Activated naive CD4-positive, alpha-beta T cell treated with anti-CD3 and anti-CD28 coated beads for 36 hours (primary cell): ENCODE measurements at regions of chr4 and their contacts with region 1.

Region 1: DNA sequence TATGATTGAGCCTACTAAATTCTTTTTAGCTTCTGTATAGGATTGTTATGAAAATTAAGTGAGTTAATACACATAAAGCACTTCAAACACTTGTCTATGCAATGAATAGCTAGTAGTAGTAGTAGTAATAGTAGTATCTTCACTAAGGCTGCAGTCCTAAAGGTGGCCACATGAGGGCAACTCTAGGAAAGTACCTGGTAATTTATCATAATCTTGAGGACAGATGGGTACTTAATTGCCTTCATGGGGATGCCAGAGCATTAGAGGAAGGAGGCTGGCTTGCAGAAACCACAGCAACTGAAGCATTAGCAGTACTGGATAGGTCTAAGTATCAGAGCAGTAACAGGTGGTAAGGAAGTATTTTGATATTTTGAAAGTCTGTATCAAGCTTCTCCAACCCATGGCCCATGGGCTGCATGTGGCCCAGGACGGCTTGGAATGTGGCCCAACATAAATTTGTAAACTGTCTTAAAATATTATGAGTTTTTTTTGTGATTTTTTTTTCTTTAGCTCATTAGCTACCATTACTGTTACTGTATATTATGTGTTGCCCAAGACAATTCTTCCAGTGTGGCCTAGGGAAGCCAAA is 17.3 kb downstream of the NIPAL1 start:
- DNase-seq: peak; percentile 87
- H3K4me3 Mint-ChIP-seq: no peak overlapping the region
- H3K27ac Mint-ChIP-seq: no peak overlapping the region
- H3K4me1 Mint-ChIP-seq: peaks cover 56% of the 10 kb centered on the region
- H3K27me3 Mint-ChIP-seq: no peaks in the 10 kb centered on the region

Region 2: GRCh38 chr4:47873877-47874541 is 159.9 kb before region 1 on chr4:
- CTCF ChIA-PET with region 1: no interaction called
- intact Hi-C with region 1: loop called (anchors 1 kb)
- DNase-seq: no peak
- H3K4me3 Mint-ChIP-seq: no peak overlapping the region
- H3K27ac Mint-ChIP-seq: peak overlapping the region; percentile 16
- H3K4me1 Mint-ChIP-seq: peaks cover 11% of the 10 kb centered on the region
- H3K27me3 Mint-ChIP-seq: no peaks in the 10 kb centered on the region

Region 3: GRCh38 chr4:48016141-48017103 is 17.5 kb before region 1 on chr4 and contains the starts of genes CNGA1 and NIPAL1:
- CTCF ChIA-PET with region 1: interaction called, 48 read pairs
- intact Hi-C with region 1: loop called (anchors 1 kb)
- DNase-seq: peak; percentile 72
- H3K4me3 Mint-ChIP-seq: peak within 1 kb of the TSS; percentile 81
- H3K27ac Mint-ChIP-seq: peak within 1 kb of the TSS; percentile 46
- H3K4me1 Mint-ChIP-seq: peaks cover 26% of the 10 kb centered on the region
- H3K27me3 Mint-ChIP-seq: peaks cover 5% of the 10 kb centered on the region
- total RNA-seq, gene CNGA1: 0.26 to 0.94 TPM
- total RNA-seq, gene NIPAL1: 1.0 to 2.0 TPM

Region 4: GRCh38 chr4:48085821-48086607 is 52.1 kb after region 1 on chr4:
- CTCF ChIA-PET with region 1: interaction called, 71 read pairs
- intact Hi-C with region 1: loop called (anchors 1 kb)
- DNase-seq: no peak
- H3K4me3 Mint-ChIP-seq: no peak overlapping the region
- H3K27ac Mint-ChIP-seq: no peak overlapping the region
- H3K4me1 Mint-ChIP-seq: peaks cover 27% of the 10 kb centered on the region
- H3K27me3 Mint-ChIP-seq: no peaks in the 10 kb centered on the region

Region 5: GRCh38 chr4:48141048-48141447 is 107.1 kb after region 1 on chr4:
- CTCF ChIA-PET with region 1: interaction called, 15 read pairs
- intact Hi-C with region 1: loop called (anchors 1 kb)
- DNase-seq: no peak
- H3K4me3 Mint-ChIP-seq: no peak overlapping the region
- H3K27ac Mint-ChIP-seq: no peak overlapping the region
- H3K4me1 Mint-ChIP-seq: peaks cover 46% of the 10 kb centered on the region
- H3K27me3 Mint-ChIP-seq: no peaks in the 10 kb centered on the region

Region 6: GRCh38 chr4:48439988-48440387 is 406.1 kb after region 1 on chr4:
- CTCF ChIA-PET with region 1: no interaction called
- intact Hi-C with region 1: loop called (anchors 10 kb)
- DNase-seq: no peak
- H3K4me3 Mint-ChIP-seq: no peak overlapping the region
- H3K27ac Mint-ChIP-seq: no peak overlapping the region
- H3K4me1 Mint-ChIP-seq: no peaks in the 10 kb centered on the region
- H3K27me3 Mint-ChIP-seq: no peaks in the 10 kb centered on the region